SK-N-SH (cell line): ENCODE measurements at regions of chr7 and their contacts with region 1.

Region 1: GRCh38 chr7:96075510-96076349 is 246.2 kb downstream of the SLC25A13 start:
- DNase-seq: peak; percentile 91
- H3K4me3 ChIP-seq: peak overlapping the region; percentile 68 to 69
- H3K27ac ChIP-seq: no peak overlapping the region
- H3K4me1 ChIP-seq: peaks cover 3 to 7% of the 10 kb centered on the region in 2 experiments; a peak in 3 of 4 replicates
- H3K27me3 ChIP-seq: peaks cover 11% of the 10 kb centered on the region; the same call in 1 of the 2 replicates
- CTCF ChIP-seq: peak; percentile 99
- EP300 ChIP-seq: no peak
- RAD21 ChIP-seq: peak; percentile 98

Region 2: DNA sequence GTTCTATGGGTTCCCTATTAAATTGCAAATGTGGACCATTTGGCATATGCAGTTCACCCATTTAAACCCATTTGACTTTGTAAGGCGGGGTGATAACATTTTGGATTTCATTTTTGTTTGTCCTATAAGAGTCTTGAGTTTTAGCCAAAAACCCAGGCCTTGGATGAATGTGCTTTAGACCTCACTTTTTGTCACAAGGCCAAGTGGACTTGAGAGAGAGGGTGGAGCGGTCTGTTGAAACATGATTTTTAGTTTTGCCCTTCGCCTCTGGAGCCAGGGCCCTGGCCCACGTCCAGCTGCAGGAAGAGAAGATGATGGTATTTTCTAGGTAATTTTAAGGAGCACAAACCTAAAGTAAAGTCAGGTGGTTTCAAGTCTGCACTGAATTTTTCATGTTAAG is 13.9 kb before region 1 on chr7:
- CTCF ChIA-PET with region 1: interaction called, 16 read pairs
- POLR2A ChIA-PET with region 1: no interaction called
- DNase-seq: no peak
- H3K4me3 ChIP-seq: no peak overlapping the region
- H3K27ac ChIP-seq: no peak overlapping the region
- H3K4me1 ChIP-seq: peaks cover 0 to 16% of the 10 kb centered on the region in 2 experiments; a peak in 2 of 4 replicates
- H3K27me3 ChIP-seq: peaks cover 18% of the 10 kb centered on the region; the same call in 1 of the 2 replicates
- CTCF ChIP-seq: no peak
- EP300 ChIP-seq: no peak
- RAD21 ChIP-seq: no peak

Region 3: DNA sequence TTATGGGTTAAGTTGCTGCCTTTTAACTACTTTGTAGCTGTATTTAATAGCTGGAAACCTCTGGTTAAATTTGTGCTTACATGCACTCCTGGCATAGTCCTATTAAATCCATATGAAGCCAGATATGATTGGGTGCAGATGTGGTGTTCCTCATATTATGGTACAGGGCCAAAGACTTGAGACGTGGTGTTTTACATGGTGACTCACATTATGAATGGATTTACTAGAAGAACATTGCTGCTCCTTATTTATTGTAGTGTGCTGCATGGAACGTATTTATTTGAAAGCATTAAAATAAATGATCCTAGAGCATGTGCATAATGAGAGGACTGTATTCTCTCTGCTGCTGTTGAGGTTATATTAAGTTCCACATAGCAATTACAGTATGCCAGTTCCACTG is 22.1 kb after region 1 on chr7:
- CTCF ChIA-PET with region 1: interaction called, 13 read pairs
- POLR2A ChIA-PET with region 1: no interaction called
- DNase-seq: no peak
- H3K4me3 ChIP-seq: no peak overlapping the region
- H3K27ac ChIP-seq: no peak overlapping the region
- H3K4me1 ChIP-seq: peaks cover 0 to 7% of the 10 kb centered on the region in 2 experiments; a peak in 2 of 4 replicates
- H3K27me3 ChIP-seq: no peaks in the 10 kb centered on the region
- CTCF ChIP-seq: no peak
- EP300 ChIP-seq: no peak
- RAD21 ChIP-seq: no peak

Region 4: DNA sequence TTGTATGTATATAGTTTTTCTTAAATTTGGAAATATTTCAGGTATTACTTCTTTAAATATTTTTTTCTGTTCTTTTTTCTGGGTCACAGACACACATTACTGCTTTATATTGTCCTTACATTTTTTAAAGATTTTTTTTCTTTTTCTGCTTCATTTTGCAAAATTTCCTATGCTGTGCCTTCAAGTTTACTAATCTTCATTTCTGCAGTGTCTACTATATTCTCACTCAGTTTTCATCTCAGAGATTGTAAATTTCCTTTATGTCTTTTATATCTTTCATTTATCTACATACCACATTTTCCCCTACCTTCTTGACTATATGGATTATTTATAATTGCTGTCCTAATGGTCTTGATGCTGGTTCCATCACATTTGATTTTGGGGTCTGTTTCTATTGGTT is 35.7 kb after region 1 on chr7:
- CTCF ChIA-PET with region 1: no interaction called
- POLR2A ChIA-PET with region 1: no interaction called
- DNase-seq: no peak
- H3K4me3 ChIP-seq: no peak overlapping the region
- H3K27ac ChIP-seq: no peak overlapping the region
- H3K4me1 ChIP-seq: peaks cover 0 to 4% of the 10 kb centered on the region in 2 experiments; a peak in 1 of 4 replicates
- H3K27me3 ChIP-seq: no peaks in the 10 kb centered on the region
- CTCF ChIP-seq: no peak
- EP300 ChIP-seq: no peak
- RAD21 ChIP-seq: no peak

Region 5: DNA sequence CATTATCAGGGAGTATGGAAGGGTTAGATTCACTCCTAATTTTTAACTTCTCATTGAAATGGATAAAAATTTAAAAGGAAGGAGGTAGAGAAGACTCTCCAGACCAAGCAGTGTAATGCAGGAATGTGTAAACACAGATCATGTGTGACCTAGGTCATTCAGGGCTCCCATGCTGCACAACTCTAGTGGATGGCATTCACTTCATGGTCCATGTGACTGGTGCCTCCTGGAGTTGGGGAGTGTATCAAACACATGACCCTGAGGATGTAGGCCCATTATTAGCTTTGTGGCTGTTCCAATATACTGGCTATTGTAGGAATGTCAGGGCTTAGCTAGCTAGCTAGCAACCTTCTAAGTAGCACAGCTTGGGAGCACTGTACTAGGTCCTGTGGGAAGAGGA is 136.2 kb after region 1 on chr7:
- CTCF ChIA-PET with region 1: no interaction called
- POLR2A ChIA-PET with region 1: no interaction called
- DNase-seq: no peak
- H3K4me3 ChIP-seq: no peak overlapping the region
- H3K27ac ChIP-seq: no peak overlapping the region
- H3K4me1 ChIP-seq: no peaks in the 10 kb centered on the region
- H3K27me3 ChIP-seq: no peaks in the 10 kb centered on the region
- CTCF ChIP-seq: no peak
- EP300 ChIP-seq: no peak
- RAD21 ChIP-seq: no peak

Region 6: DNA sequence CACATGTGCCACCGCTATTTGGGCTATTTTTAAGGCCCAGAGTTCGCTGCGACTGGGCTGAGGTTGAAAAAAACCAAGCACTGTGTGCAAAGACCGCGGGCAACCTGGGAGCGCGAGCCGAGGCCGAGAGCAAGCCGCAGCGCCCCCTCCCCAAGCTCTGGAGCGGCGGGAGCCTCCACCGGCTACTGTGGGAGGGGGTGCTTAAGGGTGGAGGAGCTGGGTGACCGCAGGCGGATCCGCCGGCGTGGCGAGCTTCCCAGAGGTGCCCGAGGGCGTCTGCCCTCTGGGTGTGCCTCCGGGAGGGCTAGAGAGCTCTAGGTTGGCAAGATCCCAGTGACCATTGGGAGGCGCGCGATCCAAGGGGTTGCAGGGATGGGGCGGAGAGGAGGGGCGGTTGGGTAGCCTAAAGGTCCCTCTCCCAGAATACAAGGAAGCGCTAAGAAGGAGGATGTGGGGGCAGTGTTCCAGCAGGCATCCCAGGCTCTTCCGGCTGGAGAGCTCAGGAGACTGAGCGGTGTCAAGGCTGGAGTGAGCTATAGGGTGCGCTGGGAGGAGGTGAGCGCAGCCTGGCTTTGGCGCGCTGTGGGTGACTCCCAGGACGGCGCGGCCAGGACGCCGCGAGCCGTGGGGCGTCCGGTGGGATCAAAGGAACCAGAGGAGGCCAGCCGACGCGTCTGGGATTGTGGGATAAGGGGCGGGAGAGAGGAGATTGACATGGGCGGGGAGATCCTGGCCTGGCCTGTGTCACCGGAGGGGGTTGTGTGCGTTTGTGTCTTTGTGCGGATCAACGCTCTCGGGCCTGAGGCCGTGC is 940.9 kb after region 1 on chr7:
- CTCF ChIA-PET with region 1: interaction called, 23 read pairs
- POLR2A ChIA-PET with region 1: interaction called, 3 read pairs
- DNase-seq: peak; percentile 89
- H3K4me3 ChIP-seq: peak overlapping the region; percentile 38 to 53
- H3K27ac ChIP-seq: no peak overlapping the region
- H3K4me1 ChIP-seq: peaks cover 0 to 8% of the 10 kb centered on the region in 2 experiments; a peak in 3 of 4 replicates
- H3K27me3 ChIP-seq: peaks cover 27% of the 10 kb centered on the region
- CTCF ChIP-seq: no peak
- EP300 ChIP-seq: no peak
- RAD21 ChIP-seq: no peak